ENCODE measurements at regions of chr3 and their contacts with region 1.

Region 1: DNA sequence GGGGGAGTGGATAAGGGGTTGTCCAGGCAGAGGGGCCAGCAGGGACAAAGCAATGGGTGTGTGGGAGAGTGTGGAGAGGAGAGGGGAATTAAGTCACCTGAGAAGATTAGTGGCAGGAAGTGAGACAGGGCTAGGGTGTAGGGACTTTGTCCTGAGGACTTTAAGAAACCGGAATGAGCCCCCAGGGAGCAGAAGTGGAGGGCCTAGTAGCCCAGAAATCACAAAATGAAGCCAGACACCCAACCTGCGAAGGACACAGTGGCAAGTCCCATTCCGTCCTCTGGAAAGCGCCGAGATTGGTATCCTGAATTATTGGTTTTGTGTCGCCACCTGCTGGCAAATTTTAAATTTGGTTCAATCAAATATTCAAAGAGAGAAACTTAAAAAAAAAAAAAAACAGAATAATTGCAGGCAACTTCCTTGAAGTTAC is 78.0 kb upstream of the SLC25A36 start:
- DNase-seq: peak; percentile 39
- ATAC-seq: peak; percentile 56; the same call in 1 of the 2 replicates
- H3K4me3 ChIP-seq: no peak overlapping the region
- H3K27ac ChIP-seq: no peak overlapping the region
- H3K4me1 ChIP-seq: no peaks in the 10 kb centered on the region
- H3K27me3 ChIP-seq: no peaks in the 10 kb centered on the region
- CTCF ChIP-seq: peak; percentile 62
- POLR2A ChIP-seq: no peak
- RAD21 ChIP-seq: peak; percentile 61

Region 2: DNA sequence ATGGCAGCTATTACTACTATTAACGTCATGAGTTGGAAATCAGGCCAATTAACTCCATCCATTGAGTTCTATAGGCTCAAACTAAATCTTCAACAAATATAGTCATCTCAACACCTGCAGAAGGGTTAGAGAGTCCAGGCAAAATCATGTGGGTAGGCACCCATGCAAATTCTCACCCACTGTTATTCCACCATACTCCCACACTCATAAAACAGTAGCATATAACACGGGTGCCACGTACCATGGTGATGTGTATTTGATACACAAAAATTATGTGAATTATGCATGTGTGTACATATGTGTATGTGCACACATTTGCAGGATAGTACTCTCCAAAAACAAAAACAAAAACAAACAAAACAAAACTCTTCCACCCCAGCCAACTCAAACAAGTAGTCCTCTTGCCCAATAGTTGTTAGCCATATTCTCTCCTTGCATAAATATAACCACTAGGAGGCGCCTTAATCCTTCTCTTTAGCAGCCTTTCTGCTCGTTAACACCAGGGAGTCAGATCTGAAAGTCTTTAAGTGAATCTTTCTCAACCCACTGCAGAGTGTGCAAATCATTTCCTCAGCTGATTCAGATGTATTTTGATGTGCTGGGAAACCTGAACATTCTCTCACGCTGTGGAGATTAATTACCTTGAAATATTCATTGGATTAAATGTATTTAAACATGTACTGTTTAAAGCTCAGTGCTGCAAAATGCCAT is 1436.2 kb before region 1 on chr3:
- CTCF ChIA-PET with region 1: interaction called, 3 read pairs
- POLR2A ChIA-PET with region 1: no interaction called
- dilution Hi-C with region 1: no loop called
- in situ Hi-C with region 1: loop called (anchors 25 kb)
- intact Hi-C with region 1: loop called (anchors 1 kb)
- DNase-seq: peak; percentile 71
- ATAC-seq: peak; percentile 89
- H3K4me3 ChIP-seq: no peak overlapping the region
- H3K27ac ChIP-seq: no peak overlapping the region
- H3K4me1 ChIP-seq: no peaks in the 10 kb centered on the region
- H3K27me3 ChIP-seq: no peaks in the 10 kb centered on the region
- CTCF ChIP-seq: peak; percentile 86
- POLR2A ChIP-seq: no peak
- RAD21 ChIP-seq: peak; percentile 86

Region 3: GRCh38 chr3:139588450-139588849 is 1275.1 kb before region 1 on chr3:
- CTCF ChIA-PET with region 1: no interaction called
- POLR2A ChIA-PET with region 1: no interaction called
- dilution Hi-C with region 1: no loop called
- in situ Hi-C with region 1: no loop called
- intact Hi-C with region 1: loop called (anchors 10 kb)
- DNase-seq: no peak
- ATAC-seq: no peak
- H3K4me3 ChIP-seq: no peak overlapping the region
- H3K27ac ChIP-seq: no peak overlapping the region
- H3K4me1 ChIP-seq: no peaks in the 10 kb centered on the region
- H3K27me3 ChIP-seq: no peaks in the 10 kb centered on the region
- CTCF ChIP-seq: no peak
- POLR2A ChIP-seq: no peak
- RAD21 ChIP-seq: no peak

Region 4: DNA sequence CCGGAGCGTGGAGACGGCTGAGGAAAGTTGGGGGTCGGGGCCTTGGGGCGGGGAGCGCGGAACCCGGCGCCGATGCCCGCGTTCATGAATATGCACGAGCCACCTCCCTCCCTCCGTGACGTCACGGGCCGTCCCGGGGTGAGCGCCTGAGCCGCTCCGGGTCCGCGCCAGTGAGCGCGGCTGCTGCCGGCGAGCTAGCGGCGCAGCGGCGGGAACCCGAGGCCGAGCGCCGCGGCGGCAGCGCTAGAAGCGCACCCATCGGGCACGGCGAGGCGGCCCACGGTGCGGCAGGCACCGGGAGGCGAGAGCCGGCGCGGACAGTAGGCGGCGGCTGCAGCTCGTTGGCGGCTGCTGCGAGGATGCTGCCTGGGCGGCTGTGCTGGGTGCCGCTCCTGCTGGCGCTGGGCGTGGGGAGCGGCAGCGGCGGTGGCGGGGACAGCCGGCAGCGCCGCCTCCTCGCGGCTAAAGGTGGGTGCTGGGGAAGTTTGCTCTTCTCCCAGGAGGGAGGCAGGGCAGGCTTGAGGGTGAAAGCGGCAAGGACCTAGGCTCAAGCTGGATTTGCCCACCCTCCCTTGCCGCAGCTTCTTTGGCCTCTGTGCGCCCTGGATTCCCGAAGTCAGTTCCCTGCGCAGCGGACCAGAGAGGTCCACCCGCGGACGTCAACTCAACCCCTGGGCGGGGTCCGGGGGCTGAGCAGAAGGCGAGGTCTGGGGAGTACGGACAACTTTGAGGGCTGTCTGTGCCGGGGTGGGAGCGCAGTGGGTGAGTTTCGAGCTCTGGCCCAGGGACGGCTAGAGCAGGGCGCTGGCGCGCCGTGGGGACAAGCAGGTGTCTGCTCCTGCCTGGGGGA is 928.4 kb before region 1 on chr3 and contains the start of gene CLSTN2:
- CTCF ChIA-PET with region 1: no interaction called
- POLR2A ChIA-PET with region 1: no interaction called
- dilution Hi-C with region 1: no loop called
- in situ Hi-C with region 1: loop called (anchors 25 kb)
- intact Hi-C with region 1: loop called (anchors 1 kb)
- DNase-seq: no peak
- ATAC-seq: peak; percentile 70
- H3K4me3 ChIP-seq: 0 out of 2 replicates have a peak within 1 kb of the TSS, but pooled peaks have one; percentile 34
- H3K27ac ChIP-seq: no peak within 1 kb of the TSS
- H3K4me1 ChIP-seq: no peaks in the 10 kb centered on the region
- H3K27me3 ChIP-seq: peaks cover 22% of the 10 kb centered on the region
- CTCF ChIP-seq: no peak
- POLR2A ChIP-seq: no peak
- RAD21 ChIP-seq: no peak
- total RNA-seq, gene CLSTN2: under 0.01 TPM in 2 replicates

Region 5: DNA sequence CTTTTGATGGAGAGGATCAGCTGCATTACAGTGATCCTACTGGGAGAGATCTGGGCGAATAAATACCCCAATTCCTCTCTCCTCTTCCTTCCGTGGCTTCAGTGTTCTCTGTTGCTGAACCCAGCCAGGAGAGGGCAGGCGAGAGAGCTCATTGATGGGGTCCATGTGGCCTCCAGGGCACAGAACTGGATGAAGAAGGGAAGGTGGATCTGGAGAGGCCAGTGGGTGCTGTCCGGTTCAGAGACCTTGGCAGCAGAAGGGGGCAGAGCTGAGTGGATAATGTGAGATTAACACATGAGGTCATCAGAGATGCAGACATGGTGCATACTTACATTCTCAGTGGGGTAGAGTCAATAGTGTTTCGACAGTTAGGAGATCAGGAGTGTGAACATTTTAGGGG is 735.0 kb before region 1 on chr3:
- CTCF ChIA-PET with region 1: no interaction called
- POLR2A ChIA-PET with region 1: no interaction called
- dilution Hi-C with region 1: no loop called
- in situ Hi-C with region 1: no loop called
- intact Hi-C with region 1: loop called (anchors 2 kb)
- DNase-seq: peak; percentile 11
- ATAC-seq: 0 out of 2 replicates have a peak, but pooled peaks have one; percentile 37
- H3K4me3 ChIP-seq: no peak overlapping the region
- H3K27ac ChIP-seq: no peak overlapping the region
- H3K4me1 ChIP-seq: no peaks in the 10 kb centered on the region
- H3K27me3 ChIP-seq: no peaks in the 10 kb centered on the region
- CTCF ChIP-seq: peak; percentile 43
- POLR2A ChIP-seq: no peak
- RAD21 ChIP-seq: peak; percentile 30; the same call in 1 of the 2 replicates